ENCODE measurements at regions of chr17 and their contacts with region 1.

Region 1: GRCh38 chr17:8173056-8173870 is 2.9 kb downstream of the TMEM107 start:
- DNase-seq: peak; percentile 96
- ATAC-seq: peak; percentile 86
- H3K4me3 Mint-ChIP-seq: peak overlapping the region; percentile 89
- H3K27ac Mint-ChIP-seq: peak overlapping the region; percentile 100
- H3K4me1 Mint-ChIP-seq: peaks cover 39% of the 10 kb centered on the region
- H3K27me3 Mint-ChIP-seq: no peaks in the 10 kb centered on the region
- CTCF ChIP-seq: no peak

Region 2: DNA sequence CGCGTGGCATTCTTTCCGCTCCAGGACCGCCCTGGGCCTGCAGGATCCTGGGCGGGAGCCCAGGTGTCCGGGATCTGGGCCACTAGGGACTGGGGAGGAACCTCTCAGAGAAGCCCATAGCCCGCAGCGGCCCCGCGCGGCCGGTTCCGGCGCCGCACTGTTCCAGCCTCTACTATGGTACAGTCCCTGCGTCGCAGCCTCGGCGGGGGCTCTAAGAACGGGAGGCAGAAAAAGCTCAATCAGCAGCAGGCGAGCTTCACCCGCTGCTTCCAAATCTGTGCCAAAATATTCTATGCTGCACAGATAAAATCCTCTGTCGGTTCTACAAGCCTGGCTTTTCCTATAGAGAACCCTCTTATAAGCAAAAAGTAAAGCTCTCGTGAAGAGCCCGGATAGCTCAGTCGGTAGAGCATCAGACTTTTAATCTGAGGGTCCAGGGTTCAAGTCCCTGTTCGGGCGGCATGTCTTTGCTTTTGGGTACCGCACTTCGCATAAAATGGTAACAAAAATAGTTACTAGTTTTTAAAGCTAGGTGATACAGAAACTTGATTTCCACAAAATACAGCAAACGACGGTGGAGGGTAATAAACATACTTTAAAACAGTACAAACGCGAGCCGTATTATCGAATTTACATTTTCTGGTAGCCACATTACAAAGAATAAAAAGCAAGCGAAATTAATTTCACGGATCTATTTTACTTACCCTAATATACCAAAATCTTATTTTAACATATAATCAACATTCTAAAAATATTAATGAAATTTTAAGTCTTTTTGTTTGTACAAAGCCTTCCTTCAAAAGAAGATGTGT is 54.3 kb before region 1 on chr17:
- CTCF ChIA-PET with region 1: interaction called, 14 read pairs
- POLR2A ChIA-PET with region 1: interaction called, 102 read pairs
- intact Hi-C with region 1: no loop called
- DNase-seq: peak; percentile 95
- ATAC-seq: peak; percentile 57
- H3K4me3 Mint-ChIP-seq: peak overlapping the region; percentile 97
- H3K27ac Mint-ChIP-seq: peak overlapping the region; percentile 95
- H3K4me1 Mint-ChIP-seq: peaks cover 35% of the 10 kb centered on the region
- H3K27me3 Mint-ChIP-seq: peaks cover 43% of the 10 kb centered on the region
- CTCF ChIP-seq: peak; percentile 94

Region 3: GRCh38 chr17:8138672-8139371 is 34.4 kb before region 1 on chr17:
- CTCF ChIA-PET with region 1: interaction called, 3 read pairs
- POLR2A ChIA-PET with region 1: interaction called, 476 read pairs
- intact Hi-C with region 1: no loop called
- DNase-seq: peak; percentile 98
- ATAC-seq: peak; percentile 90
- H3K4me3 Mint-ChIP-seq: no peak overlapping the region
- H3K27ac Mint-ChIP-seq: no peak overlapping the region
- H3K4me1 Mint-ChIP-seq: no peaks in the 10 kb centered on the region
- H3K27me3 Mint-ChIP-seq: peaks cover 3% of the 10 kb centered on the region
- CTCF ChIP-seq: peak; percentile 87

Region 4: GRCh38 chr17:8204761-8205555 is 31.7 kb after region 1 on chr17:
- CTCF ChIA-PET with region 1: no interaction called
- POLR2A ChIA-PET with region 1: interaction called, 40 read pairs
- intact Hi-C with region 1: no loop called
- DNase-seq: no peak
- ATAC-seq: no peak
- H3K4me3 Mint-ChIP-seq: no peak overlapping the region
- H3K27ac Mint-ChIP-seq: no peak overlapping the region
- H3K4me1 Mint-ChIP-seq: peaks cover 16% of the 10 kb centered on the region
- H3K27me3 Mint-ChIP-seq: no peaks in the 10 kb centered on the region
- CTCF ChIP-seq: no peak

Region 5: DNA sequence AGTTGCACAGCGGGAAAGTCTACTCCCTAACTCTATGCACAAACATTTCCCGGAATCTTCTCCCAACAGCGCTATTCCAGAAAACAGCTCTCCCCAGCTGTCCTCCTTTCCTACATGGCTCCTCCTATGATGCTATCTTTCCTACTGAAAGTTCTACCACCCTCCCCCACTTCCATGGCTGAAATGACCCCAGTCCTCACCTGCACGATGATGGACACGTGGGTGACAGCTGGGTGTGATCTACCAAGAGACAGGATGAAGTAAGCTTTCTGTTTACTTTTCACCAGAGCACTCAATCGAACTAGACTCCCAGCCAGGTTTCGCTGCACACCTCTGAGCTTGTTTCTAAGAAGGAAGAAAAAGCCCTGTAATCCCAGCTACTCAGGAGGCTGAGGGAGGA is 63.9 kb after region 1 on chr17:
- CTCF ChIA-PET with region 1: no interaction called
- POLR2A ChIA-PET with region 1: interaction called, 13 read pairs
- intact Hi-C with region 1: no loop called
- DNase-seq: no peak
- ATAC-seq: no peak
- H3K4me3 Mint-ChIP-seq: no peak overlapping the region
- H3K27ac Mint-ChIP-seq: no peak overlapping the region
- H3K4me1 Mint-ChIP-seq: peaks cover 11% of the 10 kb centered on the region
- H3K27me3 Mint-ChIP-seq: no peaks in the 10 kb centered on the region
- CTCF ChIP-seq: no peak

Region 6: GRCh38 chr17:8294814-8295316 is 121.6 kb after region 1 on chr17:
- CTCF ChIA-PET with region 1: no interaction called
- POLR2A ChIA-PET with region 1: interaction called, 15 read pairs
- intact Hi-C with region 1: no loop called
- DNase-seq: no peak
- ATAC-seq: no peak
- H3K4me3 Mint-ChIP-seq: peak overlapping the region; percentile 77
- H3K27ac Mint-ChIP-seq: peak overlapping the region; percentile 78
- H3K4me1 Mint-ChIP-seq: peaks cover 32% of the 10 kb centered on the region
- H3K27me3 Mint-ChIP-seq: no peaks in the 10 kb centered on the region
- CTCF ChIP-seq: no peak

Measured in activated CD8-positive, alpha-beta T cell treated with anti-CD3 and anti-CD28 coated beads for 36 hours (primary cell).